Endothelial cell of umbilical vein (primary cell): ENCODE measurements at regions of chr3 and their contacts with region 1.

Region 1: DNA sequence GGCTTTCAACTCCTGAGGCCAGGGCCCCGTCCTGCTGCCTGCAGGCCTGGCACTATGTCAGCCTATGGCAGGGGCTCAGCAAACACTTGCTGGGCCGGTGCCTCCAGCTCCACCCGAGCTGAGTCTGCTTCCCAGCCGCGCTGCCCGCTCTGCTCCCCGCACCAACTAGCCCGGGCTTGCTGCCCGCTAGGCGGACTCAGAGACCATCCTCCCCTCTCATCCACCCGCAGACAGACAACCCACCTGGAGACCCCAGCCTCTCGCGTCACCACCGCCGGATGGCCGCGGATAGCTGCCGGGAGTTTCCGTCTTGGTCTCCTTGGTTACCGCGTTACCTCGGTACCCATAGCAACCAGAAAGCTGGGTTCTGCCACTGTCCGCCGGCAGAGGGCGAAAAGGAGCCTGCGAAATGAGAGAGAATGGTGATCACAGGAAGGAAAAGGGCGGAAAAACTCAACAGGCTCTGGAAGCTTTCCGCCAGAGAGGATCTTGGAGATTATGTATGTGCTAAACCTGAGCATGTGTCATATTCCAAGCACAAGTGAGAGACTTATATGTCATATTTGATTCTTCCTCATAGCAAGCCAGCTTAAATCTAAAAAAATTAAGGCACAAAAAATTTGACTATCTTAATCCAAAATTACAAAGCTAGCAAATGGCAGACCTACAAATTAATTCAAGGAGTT is at the start of gene ZBBX:
- DNase-seq: peak; percentile 89
- H3K4me3 ChIP-seq: peak within 1 kb of the TSS in 2 of 3 experiments; percentile 55 to 57
- H3K27ac ChIP-seq: no peak within 1 kb of the TSS
- H3K4me1 ChIP-seq: no peaks in the 10 kb centered on the region
- H3K27me3 ChIP-seq: no peaks in the 10 kb centered on the region
- CTCF ChIP-seq: peak; percentile 87 to 95
- POLR2A ChIP-seq: no peak
- total RNA-seq, gene ZBBX: not detected in 2 replicates

Region 2: GRCh38 chr3:167066977-167067786 is 313.0 kb before region 1 on chr3:
- CTCF ChIA-PET with region 1: no interaction called
- POLR2A ChIA-PET with region 1: no interaction called
- dilution Hi-C with region 1: no loop called
- intact Hi-C with region 1: no loop called
- DNase-seq: no peak
- H3K4me3 ChIP-seq: no peak overlapping the region
- H3K27ac ChIP-seq: no peak overlapping the region
- H3K4me1 ChIP-seq: no peaks in the 10 kb centered on the region
- H3K27me3 ChIP-seq: no peaks in the 10 kb centered on the region
- CTCF ChIP-seq: no peak
- POLR2A ChIP-seq: no peak

Region 3: DNA sequence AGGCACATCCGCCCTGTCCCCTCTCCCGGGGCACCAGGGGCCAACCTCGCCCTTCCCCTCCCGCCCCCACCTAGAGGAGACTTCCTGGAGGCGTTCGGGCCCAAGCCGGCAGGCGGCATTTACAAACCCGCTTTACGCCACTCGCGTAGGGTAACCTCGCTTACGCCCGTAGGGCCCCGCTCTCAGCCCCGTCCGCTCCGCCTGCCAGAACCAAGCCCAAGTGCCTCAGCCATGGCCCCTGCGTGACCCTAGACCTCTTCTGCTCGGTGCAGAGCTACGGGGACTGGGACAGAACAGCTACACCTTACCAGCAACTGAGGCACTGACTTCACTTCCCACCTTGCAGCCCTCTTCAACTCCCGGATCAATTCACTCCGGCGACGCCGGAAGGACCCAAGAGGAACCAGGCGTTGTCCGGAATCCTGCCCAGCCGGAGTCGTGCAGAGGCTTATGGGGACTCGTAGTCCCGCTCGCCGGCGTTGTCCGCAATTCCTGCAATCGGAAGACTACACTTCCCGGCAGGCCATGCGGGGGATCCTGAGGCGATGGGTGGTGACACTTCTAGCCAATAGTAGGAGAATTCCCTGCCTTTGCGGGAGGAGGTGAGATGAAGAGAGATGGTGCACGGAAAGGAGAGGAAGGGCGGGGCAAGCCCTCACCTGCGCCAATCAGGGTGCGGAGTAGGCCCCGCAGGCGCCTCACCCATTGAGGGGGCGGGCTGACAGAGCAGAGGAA is 354.5 kb after region 1 on chr3 and contains the start of gene PDCD10:
- CTCF ChIA-PET with region 1: interaction called, 11 read pairs
- POLR2A ChIA-PET with region 1: no interaction called
- dilution Hi-C with region 1: no loop called
- intact Hi-C with region 1: no loop called
- DNase-seq: peak; percentile 97
- H3K4me3 ChIP-seq: peak within 1 kb of the TSS; percentile 48 to 66 (median 61)
- H3K27ac ChIP-seq: peak within 1 kb of the TSS; percentile 21
- H3K4me1 ChIP-seq: peaks cover 10% of the 10 kb centered on the region
- H3K27me3 ChIP-seq: peaks cover 0 to 9% of the 10 kb centered on the region in 2 experiments
- CTCF ChIP-seq: peak in 1 of 2 donors; percentile 8
- POLR2A ChIP-seq: peak; percentile 65
- total RNA-seq, gene PDCD10: 47.8 and 50.1 TPM in 2 replicates

Region 4: DNA sequence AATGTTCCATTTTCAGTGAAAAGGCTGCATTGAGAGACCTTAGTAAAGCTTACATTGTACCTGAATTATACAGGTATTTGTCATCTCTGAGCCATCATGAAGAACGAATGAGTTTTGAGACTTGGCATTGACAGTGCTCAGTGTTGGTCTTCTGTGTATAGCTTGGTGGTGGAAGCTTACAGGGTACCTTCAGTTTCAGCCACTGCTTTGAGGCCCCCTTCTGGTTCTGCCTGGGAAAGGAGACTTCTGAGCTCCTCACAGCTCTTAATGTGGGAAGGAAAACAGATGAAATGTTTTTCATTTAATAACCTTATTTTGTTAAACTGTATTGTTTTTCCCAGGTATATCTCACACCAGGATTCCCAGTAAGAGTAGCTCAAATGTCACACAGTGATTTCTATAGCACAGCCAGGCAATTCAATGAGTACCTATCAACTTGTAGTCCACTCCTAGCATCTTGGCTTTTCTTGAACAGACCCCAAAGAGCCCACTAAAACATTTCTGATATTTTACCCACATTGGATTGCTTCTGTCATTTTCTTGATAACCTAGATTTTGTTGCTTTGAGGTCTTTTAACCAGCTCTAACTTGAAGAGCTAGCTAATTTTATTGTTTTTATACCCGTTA is 360.9 kb after region 1 on chr3:
- CTCF ChIA-PET with region 1: interaction called, 46 read pairs
- POLR2A ChIA-PET with region 1: no interaction called
- dilution Hi-C with region 1: no loop called
- intact Hi-C with region 1: loop called (anchors 1 kb)
- DNase-seq: peak; percentile 47
- H3K4me3 ChIP-seq: no peak overlapping the region
- H3K27ac ChIP-seq: no peak overlapping the region
- H3K4me1 ChIP-seq: no peaks in the 10 kb centered on the region
- H3K27me3 ChIP-seq: peaks cover 0 to 9% of the 10 kb centered on the region in 2 experiments
- CTCF ChIP-seq: peak; percentile 26 to 52
- POLR2A ChIP-seq: no peak